CD4-positive, alpha-beta T cell (primary cell): ENCODE measurements at regions of chr17 and their contacts with region 1.

Region 1: GRCh38 chr17:32486111-32486700 is 587 bp upstream of the CDK5R1 start:
- DNase-seq: peak; percentile 51 to 93 (median 68)
- ATAC-seq: peak; percentile 72
- H3K4me3 ChIP-seq: peak overlapping the region; percentile 38
- H3K4me3 Mint-ChIP-seq: peak overlapping the region; percentile 90
- H3K27ac ChIP-seq: peak overlapping the region; percentile 21
- H3K27ac Mint-ChIP-seq: peak overlapping the region; percentile 62
- H3K4me1 ChIP-seq: peaks cover 42% of the 10 kb centered on the region
- H3K4me1 Mint-ChIP-seq: peaks cover 55% of the 10 kb centered on the region
- H3K27me3 ChIP-seq: no peaks in the 10 kb centered on the region
- H3K27me3 Mint-ChIP-seq: no peaks in the 10 kb centered on the region
- CTCF ChIP-seq: no peak

Region 2: DNA sequence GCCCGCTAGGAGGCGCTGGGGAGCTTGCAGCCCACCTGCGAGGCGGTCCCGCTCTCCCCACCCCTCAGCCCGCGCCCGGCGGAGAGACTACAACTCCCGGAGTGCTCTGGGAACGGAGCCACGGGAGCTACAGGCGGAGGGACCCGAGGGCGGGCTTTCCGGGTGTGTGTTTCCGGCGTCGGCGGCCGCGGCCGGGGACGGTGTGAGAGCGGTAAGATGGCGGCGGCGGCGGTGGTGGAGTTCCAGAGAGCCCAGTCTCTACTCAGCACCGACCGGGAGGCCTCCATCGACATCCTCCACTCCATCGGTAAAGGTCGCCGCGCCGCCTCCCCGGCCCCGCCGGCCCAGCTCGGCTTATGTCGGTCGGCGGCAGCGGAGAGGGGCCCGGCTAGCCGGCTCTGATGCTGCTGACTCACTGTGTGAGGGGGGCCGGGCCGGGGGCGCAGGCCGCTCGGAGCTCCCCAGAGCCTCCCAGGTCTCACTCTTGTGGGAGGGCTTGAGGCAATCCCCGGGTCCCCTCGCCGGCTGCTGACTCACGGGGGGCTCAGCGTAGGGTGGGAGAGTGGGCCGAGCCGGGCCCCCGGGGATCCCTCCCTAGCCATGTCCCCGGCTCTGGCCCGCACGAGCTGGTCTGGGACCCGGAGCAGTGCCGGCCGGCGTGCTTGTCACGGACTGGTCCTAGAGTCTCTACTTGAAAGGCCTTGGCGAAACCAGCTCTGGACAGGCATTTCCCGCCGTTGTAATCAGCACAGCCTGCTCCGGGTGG is 41.7 kb before region 1 on chr17 and contains the start of gene PSMD11:
- CTCF ChIA-PET with region 1: interaction called, 21 read pairs
- POLR2A ChIA-PET with region 1: interaction called, 21 read pairs
- intact Hi-C with region 1: no loop called
- DNase-seq: peak; percentile 98 to 99 (median 99)
- ATAC-seq: peak; percentile 97
- H3K4me3 ChIP-seq: peak within 1 kb of the TSS; percentile 92
- H3K4me3 Mint-ChIP-seq: peak within 1 kb of the TSS; percentile 90
- H3K27ac ChIP-seq: peak within 1 kb of the TSS; percentile 46 to 63
- H3K27ac Mint-ChIP-seq: peak within 1 kb of the TSS; percentile 18
- H3K4me1 ChIP-seq: peaks cover 17% of the 10 kb centered on the region
- H3K4me1 Mint-ChIP-seq: peaks cover 39% of the 10 kb centered on the region
- H3K27me3 ChIP-seq: no peaks in the 10 kb centered on the region
- H3K27me3 Mint-ChIP-seq: no peaks in the 10 kb centered on the region
- CTCF ChIP-seq: peak; percentile 23
- total RNA-seq, gene PSMD11: 67.6 to 68.7 TPM

Region 3: GRCh38 chr17:32497431-32498205 is 11.4 kb after region 1 on chr17:
- CTCF ChIA-PET with region 1: interaction called, 4 read pairs
- POLR2A ChIA-PET with region 1: interaction called, 51 read pairs
- intact Hi-C with region 1: loop called in 1 of 2 experiments (anchors 2 kb)
- DNase-seq: no peak
- ATAC-seq: no peak
- H3K4me3 ChIP-seq: no peak overlapping the region
- H3K4me3 Mint-ChIP-seq: no peak overlapping the region
- H3K27ac ChIP-seq: no peak overlapping the region
- H3K27ac Mint-ChIP-seq: peak overlapping the region; percentile 30
- H3K4me1 ChIP-seq: peaks cover 64% of the 10 kb centered on the region
- H3K4me1 Mint-ChIP-seq: peaks cover 40% of the 10 kb centered on the region
- H3K27me3 ChIP-seq: no peaks in the 10 kb centered on the region
- H3K27me3 Mint-ChIP-seq: no peaks in the 10 kb centered on the region
- CTCF ChIP-seq: no peak

Region 4: DNA sequence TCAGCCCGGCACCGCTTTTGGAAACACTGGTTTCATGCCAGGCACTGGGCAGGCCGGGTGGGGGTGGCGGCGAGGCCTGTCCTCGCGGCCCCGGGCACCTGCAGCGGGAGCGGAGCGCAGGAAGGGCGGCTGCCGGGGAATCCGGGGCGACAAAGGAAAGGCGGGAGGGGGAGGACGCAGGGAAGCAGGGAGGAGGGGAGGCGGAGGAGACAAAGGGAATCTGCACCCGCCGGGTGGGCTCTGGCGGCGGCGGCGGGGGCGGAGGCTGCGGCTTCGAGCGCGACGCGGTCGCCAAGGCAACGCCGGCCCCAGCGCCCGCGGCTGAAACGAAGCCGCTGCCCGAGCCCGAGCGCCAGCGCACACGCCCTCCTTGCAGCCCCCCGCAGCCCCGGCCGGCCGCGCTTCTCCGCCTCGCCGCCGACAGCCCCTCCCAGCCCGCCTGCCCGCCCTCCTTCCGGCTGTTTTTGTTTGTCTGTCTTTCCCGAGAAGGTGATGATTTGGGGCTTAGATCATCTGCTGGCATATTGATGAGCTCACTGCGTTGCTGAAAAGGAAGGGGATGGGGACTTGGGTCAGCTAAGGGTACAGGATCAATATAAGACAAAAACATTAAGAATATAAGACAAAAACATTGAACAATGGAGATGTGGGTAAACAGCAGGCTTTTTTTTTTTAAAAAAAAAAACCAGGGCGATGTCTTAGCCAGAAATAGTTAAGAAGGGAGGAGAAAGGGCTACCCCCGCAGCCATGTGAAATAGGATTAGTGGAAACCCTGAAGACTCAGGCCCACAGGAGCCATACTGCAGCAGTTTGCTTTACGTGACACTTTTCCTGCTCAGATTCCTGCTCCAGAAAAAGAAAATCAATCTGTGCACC is 33.3 kb after region 1 on chr17:
- CTCF ChIA-PET with region 1: interaction called, 15 read pairs
- POLR2A ChIA-PET with region 1: interaction called, 152 read pairs
- intact Hi-C with region 1: loop called (anchors 2 kb)
- DNase-seq: peak in 13 of 14 experiments; percentile 60 to 87 (median 76)
- ATAC-seq: peak; percentile 49
- H3K4me3 ChIP-seq: peak overlapping the region; percentile 43
- H3K4me3 Mint-ChIP-seq: peak overlapping the region; percentile 83
- H3K27ac ChIP-seq: peak overlapping the region; percentile 84
- H3K27ac Mint-ChIP-seq: peak overlapping the region; percentile 87
- H3K4me1 ChIP-seq: peaks cover 65% of the 10 kb centered on the region
- H3K4me1 Mint-ChIP-seq: peaks cover 85% of the 10 kb centered on the region
- H3K27me3 ChIP-seq: no peaks in the 10 kb centered on the region
- H3K27me3 Mint-ChIP-seq: no peaks in the 10 kb centered on the region
- CTCF ChIP-seq: no peak

Region 5: GRCh38 chr17:32546031-32546444 is 59.8 kb after region 1 on chr17:
- CTCF ChIA-PET with region 1: no interaction called
- POLR2A ChIA-PET with region 1: no interaction called
- intact Hi-C with region 1: no loop called
- DNase-seq: no peak
- ATAC-seq: no peak
- H3K4me3 ChIP-seq: no peak overlapping the region
- H3K4me3 Mint-ChIP-seq: no peak overlapping the region
- H3K27ac ChIP-seq: no peak overlapping the region
- H3K27ac Mint-ChIP-seq: no peak overlapping the region
- H3K4me1 ChIP-seq: no peaks in the 10 kb centered on the region
- H3K4me1 Mint-ChIP-seq: peaks cover 3% of the 10 kb centered on the region
- H3K27me3 ChIP-seq: no peaks in the 10 kb centered on the region
- H3K27me3 Mint-ChIP-seq: no peaks in the 10 kb centered on the region
- CTCF ChIP-seq: no peak

Region 6: DNA sequence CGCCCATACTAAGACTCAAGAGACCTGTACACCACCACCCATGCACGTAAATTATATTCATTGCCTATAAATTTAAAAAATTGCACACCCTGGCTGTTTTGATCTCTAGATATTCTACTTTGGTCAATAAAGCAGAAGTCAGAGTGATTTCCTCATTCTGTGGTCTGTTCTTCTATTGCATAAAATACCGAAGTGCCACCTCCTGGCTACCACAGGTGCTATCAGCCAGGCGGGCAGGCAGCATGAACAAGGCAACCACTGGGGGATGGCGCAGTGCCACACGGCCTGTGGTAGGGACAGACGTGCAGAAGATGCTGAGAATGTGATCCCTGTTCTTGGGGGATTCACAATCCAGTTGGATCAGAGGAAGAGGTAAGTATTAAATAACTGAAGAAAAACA is 122.9 kb after region 1 on chr17:
- CTCF ChIA-PET with region 1: interaction called, 18 read pairs
- POLR2A ChIA-PET with region 1: interaction called, 7 read pairs
- intact Hi-C with region 1: loop called (anchors 1 kb)
- DNase-seq: peak; percentile 58 to 85 (median 70)
- ATAC-seq: peak; percentile 100
- H3K4me3 ChIP-seq: no peak overlapping the region
- H3K4me3 Mint-ChIP-seq: no peak overlapping the region
- H3K27ac ChIP-seq: no peak overlapping the region
- H3K27ac Mint-ChIP-seq: no peak overlapping the region
- H3K4me1 ChIP-seq: no peaks in the 10 kb centered on the region
- H3K4me1 Mint-ChIP-seq: peaks cover 6% of the 10 kb centered on the region
- H3K27me3 ChIP-seq: no peaks in the 10 kb centered on the region
- H3K27me3 Mint-ChIP-seq: no peaks in the 10 kb centered on the region
- CTCF ChIP-seq: peak; percentile 83